ENCODE measurements at regions of chr17 and their contacts with region 1.

Region 1: GRCh38 chr17:8222630-8223356 is 12.4 kb upstream of the AURKB start:
- DNase-seq: peak; percentile 94 to 97 (median 96)
- ATAC-seq: peak; percentile 75
- H3K4me3 ChIP-seq: peak overlapping the region; percentile 42
- H3K4me1 ChIP-seq: peaks cover 23% of the 10 kb centered on the region
- CTCF ChIP-seq: no peak

Region 2: DNA sequence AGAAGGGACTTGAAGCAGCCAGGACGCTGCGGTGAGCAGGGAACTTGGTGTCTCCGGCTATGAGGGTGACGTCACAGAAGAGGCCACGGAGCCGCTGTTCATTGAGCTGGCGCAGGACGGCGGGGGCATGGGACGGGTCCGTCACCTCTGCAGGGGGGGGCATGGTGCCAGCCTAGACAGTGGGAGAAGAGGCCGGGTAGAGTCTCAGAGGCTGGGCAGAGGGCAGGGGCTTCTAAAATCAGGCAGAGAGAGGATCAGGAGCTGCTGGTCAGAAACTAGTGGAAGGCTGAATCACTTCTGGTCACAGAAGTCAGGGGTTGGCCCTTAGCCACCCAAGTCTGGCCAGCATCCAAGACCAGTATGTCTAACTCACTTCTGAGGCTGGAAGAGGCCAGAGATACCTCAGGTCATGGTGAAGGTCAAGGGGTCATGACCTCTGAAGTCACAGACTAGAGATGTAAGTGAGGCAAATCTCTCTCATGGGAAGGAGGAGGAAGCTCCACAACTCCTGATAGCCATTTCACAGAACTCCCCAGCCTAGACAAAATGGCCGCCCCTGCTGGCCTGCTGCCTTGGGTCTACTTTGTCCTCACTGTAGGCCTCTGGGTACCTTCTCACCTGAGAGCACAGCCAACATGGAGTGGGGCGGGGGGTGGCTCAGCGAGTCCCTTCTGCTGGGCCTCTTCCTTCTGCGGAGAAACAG is 756.0 kb before region 1 on chr17:
- intact Hi-C with region 1: no loop called
- DNase-seq: peak in 1 of 3 donors; percentile 47
- ATAC-seq: peak; percentile 19
- H3K4me3 ChIP-seq: no peak overlapping the region
- H3K4me1 ChIP-seq: peaks cover 6% of the 10 kb centered on the region
- CTCF ChIP-seq: no peak

Region 3: GRCh38 chr17:8186787-8187516 is 35.8 kb before region 1 on chr17:
- intact Hi-C with region 1: loop called in 1 of 2 experiments (anchors 2 kb)
- DNase-seq: peak; percentile 94 to 98 (median 95)
- ATAC-seq: peak; percentile 64
- H3K4me3 ChIP-seq: peak overlapping the region; percentile 30
- H3K4me1 ChIP-seq: peaks cover 36% of the 10 kb centered on the region
- CTCF ChIP-seq: no peak

Region 4: DNA sequence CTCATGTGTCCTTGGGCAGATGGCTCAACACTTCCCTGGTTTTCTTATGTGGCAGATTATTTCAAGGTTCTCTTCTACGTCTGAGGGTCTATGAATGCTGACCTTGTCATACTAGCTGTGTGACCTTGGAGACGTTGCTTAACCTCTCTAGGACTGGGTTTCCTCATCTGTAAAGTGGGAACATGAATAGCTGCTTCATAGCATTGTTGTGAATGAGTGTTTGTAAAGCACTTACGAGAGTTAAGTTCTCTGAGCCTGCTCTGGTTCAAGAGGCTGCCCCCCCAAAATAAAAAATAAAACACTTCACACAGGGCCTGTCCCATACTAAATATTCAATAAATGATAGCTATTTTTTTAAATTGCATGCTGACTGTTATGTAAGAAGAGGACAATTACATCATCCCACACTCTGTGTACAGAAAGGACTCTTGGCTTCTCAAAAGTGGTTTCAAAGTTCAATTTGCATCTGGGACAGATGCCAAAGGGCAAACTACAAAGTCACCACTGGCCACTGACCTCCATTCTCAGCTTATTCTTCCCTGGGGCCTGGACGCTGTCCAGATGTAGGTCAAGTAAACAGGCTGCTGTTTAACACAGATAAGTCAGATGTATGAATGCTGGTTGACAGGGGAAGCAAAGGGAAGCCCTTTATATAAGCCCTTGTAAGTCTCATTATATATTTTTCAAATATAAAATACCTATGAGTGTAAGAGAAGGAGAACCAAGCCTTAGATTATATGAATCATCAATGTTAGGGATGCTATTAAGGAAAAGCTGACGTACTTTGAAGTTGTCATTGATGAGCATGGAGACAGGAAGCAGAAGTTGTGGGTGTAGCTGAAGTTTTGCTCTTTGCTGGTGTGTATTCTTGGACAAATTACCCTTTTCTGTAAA is 197.5 kb after region 1 on chr17:
- intact Hi-C with region 1: no loop called
- DNase-seq: peak in 2 of 3 donors; percentile 45 to 82
- ATAC-seq: peak; percentile 97
- H3K4me3 ChIP-seq: no peak overlapping the region
- H3K4me1 ChIP-seq: peaks cover 8% of the 10 kb centered on the region
- CTCF ChIP-seq: no peak